ENCODE measurements at regions of chr6 and their contacts with region 1.

Region 1: GRCh38 chr6:107820338-107821261 is 3.5 kb downstream of the SCML4 start:
- DNase-seq: peak; percentile 48
- ATAC-seq: peak; percentile 13
- H3K4me3 Mint-ChIP-seq: peak overlapping the region; percentile 81
- H3K27ac Mint-ChIP-seq: peak overlapping the region; percentile 92
- H3K4me1 Mint-ChIP-seq: peaks cover 73% of the 10 kb centered on the region
- H3K27me3 Mint-ChIP-seq: no peaks in the 10 kb centered on the region

Region 2: DNA sequence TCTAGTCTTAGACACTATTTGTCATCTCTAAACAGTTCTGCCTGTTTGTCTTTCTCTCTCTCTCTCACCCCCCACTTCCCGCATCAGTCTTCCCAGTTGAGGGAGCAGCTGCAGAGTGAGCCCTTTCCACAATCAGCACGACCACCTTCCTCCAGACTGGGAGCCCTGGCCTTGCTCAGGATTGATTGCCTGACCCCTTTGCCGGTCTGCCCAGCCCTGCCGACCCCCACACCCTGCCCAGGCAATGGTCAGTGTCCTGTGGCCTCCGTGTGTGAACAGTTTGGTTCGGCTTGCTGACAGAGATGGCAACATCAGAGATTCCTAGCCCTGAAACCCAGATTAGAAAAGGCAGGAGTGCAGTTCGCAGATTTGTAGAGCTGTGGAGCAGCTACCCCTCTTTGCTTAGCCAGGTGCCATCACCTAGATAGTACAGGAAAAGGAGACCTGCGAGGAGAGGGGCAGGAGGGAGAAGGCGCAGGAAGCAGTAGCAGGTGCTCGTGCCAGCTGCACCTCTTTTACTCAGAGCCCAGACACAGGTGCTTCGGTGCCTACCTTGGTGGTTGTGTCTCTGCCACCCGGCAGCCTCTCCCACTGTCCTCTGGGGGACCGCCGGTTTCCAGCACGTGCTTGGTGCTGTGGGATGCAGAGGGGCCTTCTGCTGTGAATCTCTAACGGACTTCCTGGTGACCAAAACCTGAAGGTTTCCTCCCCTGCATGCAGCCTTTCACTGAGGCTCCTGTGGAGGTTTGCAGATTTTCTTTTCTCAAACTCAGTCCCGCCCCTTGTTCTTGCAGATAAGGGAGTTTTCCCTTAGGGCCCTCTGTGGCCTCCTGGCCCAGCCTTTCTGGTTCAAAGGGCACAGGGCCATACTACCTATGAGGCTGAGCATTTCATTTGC is 88.9 kb before region 1 on chr6:
- POLR2A ChIA-PET with region 1: interaction called, 73 read pairs
- DNase-seq: peak; percentile 61
- ATAC-seq: peak; percentile 43
- H3K4me3 Mint-ChIP-seq: peak overlapping the region; percentile 99
- H3K27ac Mint-ChIP-seq: peak overlapping the region; percentile 93
- H3K4me1 Mint-ChIP-seq: peaks cover 71% of the 10 kb centered on the region
- H3K27me3 Mint-ChIP-seq: no peaks in the 10 kb centered on the region

Region 3: DNA sequence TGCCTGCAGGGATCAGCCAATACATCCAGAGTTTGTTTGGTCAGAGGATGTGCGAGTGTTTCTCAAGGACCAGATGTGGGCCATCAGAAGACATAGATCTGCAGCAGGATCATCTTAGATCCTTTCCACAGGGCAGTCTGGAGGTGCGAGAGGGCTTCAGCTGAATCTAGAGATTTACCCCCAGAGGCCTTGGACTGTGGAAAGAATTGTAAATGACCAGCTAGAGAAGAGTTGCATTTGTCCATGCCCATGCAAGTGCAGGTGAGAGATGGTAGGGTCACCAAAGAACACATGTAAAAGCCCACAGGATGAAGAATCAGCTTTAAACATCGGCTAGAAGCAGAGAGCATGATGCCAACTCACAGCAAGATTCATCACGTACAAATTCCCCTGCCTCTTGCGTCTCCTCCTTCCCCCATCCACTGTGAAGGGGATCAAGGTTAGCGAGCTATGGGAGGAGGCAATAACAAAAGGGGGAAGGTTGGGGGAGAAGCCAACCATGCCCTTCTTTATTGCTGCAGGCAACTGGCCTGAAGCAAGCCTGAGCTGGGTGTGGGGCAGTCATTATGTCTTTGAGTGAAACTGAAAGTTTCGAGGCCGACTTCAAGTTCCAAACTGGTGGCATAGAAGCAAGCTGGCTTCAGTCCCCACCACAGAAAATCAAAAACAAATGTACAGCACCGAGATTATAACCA is 80.0 kb before region 1 on chr6:
- POLR2A ChIA-PET with region 1: interaction called, 73 read pairs
- DNase-seq: no peak
- ATAC-seq: peak; percentile 50
- H3K4me3 Mint-ChIP-seq: peak overlapping the region; percentile 80
- H3K27ac Mint-ChIP-seq: peak overlapping the region; percentile 92
- H3K4me1 Mint-ChIP-seq: peaks cover 52% of the 10 kb centered on the region
- H3K27me3 Mint-ChIP-seq: no peaks in the 10 kb centered on the region

Region 4: GRCh38 chr6:107786709-107787588 is 33.7 kb before region 1 on chr6:
- POLR2A ChIA-PET with region 1: interaction called, 86 read pairs
- DNase-seq: no peak
- ATAC-seq: peak; percentile 82
- H3K4me3 Mint-ChIP-seq: peak overlapping the region; percentile 75
- H3K27ac Mint-ChIP-seq: peak overlapping the region; percentile 87
- H3K4me1 Mint-ChIP-seq: peaks cover 51% of the 10 kb centered on the region
- H3K27me3 Mint-ChIP-seq: no peaks in the 10 kb centered on the region

Region 5: GRCh38 chr6:107832151-107833056 is 11.8 kb after region 1 on chr6:
- POLR2A ChIA-PET with region 1: interaction called, 20 read pairs
- DNase-seq: no peak
- ATAC-seq: peak; percentile 53
- H3K4me3 Mint-ChIP-seq: peak overlapping the region; percentile 50
- H3K27ac Mint-ChIP-seq: peak overlapping the region; percentile 55
- H3K4me1 Mint-ChIP-seq: peaks cover 21% of the 10 kb centered on the region
- H3K27me3 Mint-ChIP-seq: no peaks in the 10 kb centered on the region

Region 6: DNA sequence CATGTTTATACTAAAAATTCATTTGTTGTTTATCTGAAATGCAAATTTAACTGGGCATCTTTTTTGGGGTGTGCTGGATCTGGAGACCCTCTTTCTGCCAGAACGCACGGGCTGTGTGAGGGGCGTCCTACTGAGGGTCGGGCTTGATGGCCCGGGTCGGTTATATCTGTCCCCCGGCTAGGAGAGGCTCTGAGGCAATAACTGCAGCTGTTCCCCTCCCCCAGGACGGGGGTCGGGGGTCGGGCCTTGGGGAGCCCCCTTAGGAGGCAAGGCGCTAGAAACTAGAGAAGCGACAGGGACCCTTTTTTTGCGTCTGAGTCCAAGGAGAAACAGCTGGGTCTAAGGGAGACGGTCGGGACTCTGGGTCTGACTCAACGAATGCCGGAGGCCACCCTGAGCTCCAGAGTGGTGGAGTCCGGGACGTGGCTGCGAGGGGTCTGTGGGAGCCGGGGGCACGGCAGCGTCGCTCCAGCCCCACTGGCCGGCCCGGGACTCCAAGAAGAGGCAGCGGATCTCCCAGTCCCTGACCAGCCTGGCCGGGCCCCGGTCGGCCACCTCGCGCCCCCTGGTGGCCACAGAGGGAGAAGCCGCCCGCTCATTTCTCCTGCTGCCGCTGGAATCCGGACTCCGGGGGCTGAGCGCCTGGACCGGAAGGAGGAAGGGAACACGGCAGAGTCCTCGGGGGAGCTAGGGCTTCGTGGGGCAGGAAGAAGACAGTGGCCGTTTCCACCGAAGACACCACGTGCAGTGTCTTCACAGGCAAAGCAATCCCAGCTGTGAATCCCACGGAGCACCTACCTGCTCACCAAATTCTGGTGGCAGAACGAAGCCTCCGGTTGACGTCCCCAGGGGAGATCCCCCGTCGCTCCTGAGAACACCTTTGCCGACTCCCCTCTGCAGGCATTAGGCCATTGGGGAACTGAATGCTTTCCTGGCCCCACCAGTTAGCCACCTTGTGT is 27.5 kb after region 1 on chr6:
- POLR2A ChIA-PET with region 1: interaction called, 39 read pairs
- DNase-seq: peak; percentile 92
- ATAC-seq: peak; percentile 84
- H3K4me3 Mint-ChIP-seq: peak overlapping the region; percentile 82
- H3K27ac Mint-ChIP-seq: peak overlapping the region; percentile 77
- H3K4me1 Mint-ChIP-seq: peaks cover 21% of the 10 kb centered on the region
- H3K27me3 Mint-ChIP-seq: no peaks in the 10 kb centered on the region

Region 7: GRCh38 chr6:107991061-107991460 is 170.5 kb after region 1 on chr6:
- POLR2A ChIA-PET with region 1: no interaction called
- DNase-seq: no peak
- ATAC-seq: no peak
- H3K4me3 Mint-ChIP-seq: peak overlapping the region; percentile 48
- H3K27ac Mint-ChIP-seq: peak overlapping the region; percentile 47
- H3K4me1 Mint-ChIP-seq: peaks cover 7% of the 10 kb centered on the region
- H3K27me3 Mint-ChIP-seq: peaks cover 4% of the 10 kb centered on the region

Measured in activated naive CD8-positive, alpha-beta T cell treated with anti-CD3 and anti-CD28 coated beads, Interleukin-2, amount 10 ng/mL, durations not matched to agents 7 days and 5 days (primary cell).